Caco-2 (cell line): ENCODE measurements at regions of chr15 and their contacts with region 1.

Region 1: DNA sequence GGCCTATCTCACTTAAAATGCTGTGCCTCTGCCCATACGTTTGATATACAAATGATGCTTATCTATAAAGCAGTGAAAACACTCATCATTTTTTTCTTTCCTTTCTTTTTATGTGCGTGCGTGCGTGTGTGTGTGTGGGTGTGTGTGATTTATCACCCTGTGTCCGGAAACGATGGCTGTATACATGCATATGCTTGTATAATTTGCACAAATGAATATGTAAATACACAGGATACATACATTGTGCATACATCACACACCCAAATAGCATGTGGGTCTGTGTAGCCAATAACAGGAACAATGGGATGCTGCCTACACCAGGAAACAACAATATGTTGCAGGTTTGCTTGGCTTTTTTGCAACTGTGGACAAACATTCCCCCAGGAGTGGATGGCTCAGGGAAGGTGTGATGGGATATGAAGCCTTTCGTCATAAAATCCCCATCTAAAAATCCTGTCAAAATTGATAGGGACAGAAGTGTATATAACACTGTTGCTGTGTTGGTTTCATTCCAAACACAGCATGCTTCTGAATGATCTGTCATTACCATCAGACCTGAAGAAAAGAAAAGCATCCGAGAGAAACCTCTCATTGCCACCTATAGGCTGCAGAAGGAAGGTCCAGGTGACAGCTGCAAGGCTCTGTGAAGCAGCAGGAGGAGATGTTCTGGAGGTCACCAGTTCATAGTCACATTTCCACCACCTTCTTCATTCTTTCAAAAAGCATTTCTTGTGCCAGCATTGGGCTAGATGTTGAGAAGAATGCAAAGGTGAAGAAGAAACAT is 503.9 kb upstream of the NR2F2 start:
- DNase-seq: peak in 1 of 2 experiments; percentile 39
- H3K4me3 ChIP-seq: no peak overlapping the region
- H3K4me3 Mint-ChIP-seq: no peak overlapping the region
- H3K27ac Mint-ChIP-seq: no peak overlapping the region
- H3K4me1 ChIP-seq: no peaks in the 10 kb centered on the region; the same call in 1 of the 2 replicates
- H3K4me1 Mint-ChIP-seq: no peaks in the 10 kb centered on the region
- H3K27me3 ChIP-seq: no peaks in the 10 kb centered on the region
- H3K27me3 Mint-ChIP-seq: no peaks in the 10 kb centered on the region
- CTCF ChIP-seq: peak; percentile 38 to 45

Region 2: GRCh38 chr15:95259513-95259912 is 567.1 kb before region 1 on chr15:
- CTCF ChIA-PET with region 1: no interaction called
- POLR2A ChIA-PET with region 1: no interaction called
- intact Hi-C with region 1: loop called (anchors 2 kb)
- DNase-seq: peak; percentile 55 to 65
- H3K4me3 ChIP-seq: no peak overlapping the region
- H3K4me3 Mint-ChIP-seq: no peak overlapping the region
- H3K27ac Mint-ChIP-seq: no peak overlapping the region
- H3K4me1 ChIP-seq: no peaks in the 10 kb centered on the region
- H3K4me1 Mint-ChIP-seq: no peaks in the 10 kb centered on the region
- H3K27me3 ChIP-seq: no peaks in the 10 kb centered on the region
- H3K27me3 Mint-ChIP-seq: no peaks in the 10 kb centered on the region
- CTCF ChIP-seq: peak; percentile 65 to 68

Region 3: DNA sequence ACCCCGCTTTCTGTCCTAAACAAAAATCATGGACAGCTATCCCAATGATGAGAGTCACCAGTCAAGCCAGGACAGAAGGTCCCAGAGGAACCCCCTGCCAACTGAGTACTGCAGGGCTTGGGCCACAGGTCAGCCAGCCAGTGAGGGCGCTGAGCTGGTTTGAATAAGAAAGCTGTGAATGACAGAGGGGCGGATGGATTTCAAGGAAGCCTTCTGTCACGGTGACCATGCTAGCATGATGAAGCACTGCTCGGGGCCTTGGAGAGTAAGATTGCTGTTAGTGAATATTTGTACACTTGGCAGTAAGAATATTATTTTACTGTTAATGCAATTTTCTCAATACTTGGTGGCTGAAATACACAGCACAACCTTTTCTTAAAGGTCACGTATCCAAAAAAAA is 230.1 kb before region 1 on chr15:
- CTCF ChIA-PET with region 1: no interaction called
- POLR2A ChIA-PET with region 1: no interaction called
- intact Hi-C with region 1: no loop called
- DNase-seq: no peak
- H3K4me3 ChIP-seq: no peak overlapping the region
- H3K4me3 Mint-ChIP-seq: no peak overlapping the region
- H3K27ac Mint-ChIP-seq: no peak overlapping the region
- H3K4me1 ChIP-seq: no peaks in the 10 kb centered on the region
- H3K4me1 Mint-ChIP-seq: no peaks in the 10 kb centered on the region
- H3K27me3 ChIP-seq: no peaks in the 10 kb centered on the region
- H3K27me3 Mint-ChIP-seq: peaks cover 7% of the 10 kb centered on the region
- CTCF ChIP-seq: no peak

Region 4: GRCh38 chr15:95760501-95760900 is 66.1 kb before region 1 on chr15:
- CTCF ChIA-PET with region 1: no interaction called
- POLR2A ChIA-PET with region 1: no interaction called
- intact Hi-C with region 1: loop called (anchors 1 kb)
- DNase-seq: peak; percentile 51 to 66
- H3K4me3 ChIP-seq: no peak overlapping the region
- H3K4me3 Mint-ChIP-seq: no peak overlapping the region
- H3K27ac Mint-ChIP-seq: no peak overlapping the region
- H3K4me1 ChIP-seq: no peaks in the 10 kb centered on the region
- H3K4me1 Mint-ChIP-seq: peaks cover 12% of the 10 kb centered on the region
- H3K27me3 ChIP-seq: no peaks in the 10 kb centered on the region
- H3K27me3 Mint-ChIP-seq: no peaks in the 10 kb centered on the region
- CTCF ChIP-seq: peak; percentile 46 to 50

Region 5: GRCh38 chr15:95875121-95875688 is 48.6 kb after region 1 on chr15:
- CTCF ChIA-PET with region 1: no interaction called
- POLR2A ChIA-PET with region 1: no interaction called
- intact Hi-C with region 1: no loop called
- DNase-seq: no peak
- H3K4me3 ChIP-seq: no peak overlapping the region
- H3K4me3 Mint-ChIP-seq: no peak overlapping the region
- H3K27ac Mint-ChIP-seq: no peak overlapping the region
- H3K4me1 ChIP-seq: no peaks in the 10 kb centered on the region
- H3K4me1 Mint-ChIP-seq: no peaks in the 10 kb centered on the region
- H3K27me3 ChIP-seq: no peaks in the 10 kb centered on the region
- H3K27me3 Mint-ChIP-seq: no peaks in the 10 kb centered on the region
- CTCF ChIP-seq: no peak